Naive thymus-derived CD4-positive, alpha-beta T cell (primary cell): ENCODE measurements at regions of chr2 and their contacts with region 1.

Region 1: GRCh38 chr2:73233154-73233931 is at the start of gene PRADC1:
- DNase-seq: peak; percentile 73 to 95 (median 91)
- ATAC-seq: peak; percentile 89
- H3K4me3 ChIP-seq: peak within 1 kb of the TSS; percentile 90
- H3K4me3 Mint-ChIP-seq: peak within 1 kb of the TSS; percentile 88 to 100 (median 98)
- H3K27ac ChIP-seq: peak within 1 kb of the TSS; percentile 94
- H3K27ac Mint-ChIP-seq: peak within 1 kb of the TSS; percentile 77 to 96 (median 94)
- H3K4me1 ChIP-seq: peaks cover 15% of the 10 kb centered on the region in 2 donors
- H3K4me1 Mint-ChIP-seq: peaks cover 25 to 41% (median 37%) of the 10 kb centered on the region in 7 donors
- H3K27me3 ChIP-seq: no peaks in the 10 kb centered on the region
- H3K27me3 Mint-ChIP-seq: peaks cover 0 to 2% (median 0%) of the 10 kb centered on the region in 5 donors
- total RNA-seq, gene PRADC1: 4.3 to 8.8 (median 6.9) TPM

Region 2: GRCh38 chr2:72999729-73000725 is 233.3 kb before region 1 on chr2:
- CTCF ChIA-PET with region 1: no interaction called
- POLR2A ChIA-PET with region 1: no interaction called
- intact Hi-C with region 1: no loop called
- DNase-seq: peak in 1 of 9 donors; percentile 10
- ATAC-seq: no peak
- H3K4me3 ChIP-seq: no peak overlapping the region
- H3K4me3 Mint-ChIP-seq: no peak overlapping the region
- H3K27ac ChIP-seq: no peak overlapping the region
- H3K27ac Mint-ChIP-seq: no peak overlapping the region
- H3K4me1 ChIP-seq: no peaks in the 10 kb centered on the region
- H3K4me1 Mint-ChIP-seq: no peaks in the 10 kb centered on the region
- H3K27me3 ChIP-seq: no peaks in the 10 kb centered on the region
- H3K27me3 Mint-ChIP-seq: no peaks in the 10 kb centered on the region

Region 3: DNA sequence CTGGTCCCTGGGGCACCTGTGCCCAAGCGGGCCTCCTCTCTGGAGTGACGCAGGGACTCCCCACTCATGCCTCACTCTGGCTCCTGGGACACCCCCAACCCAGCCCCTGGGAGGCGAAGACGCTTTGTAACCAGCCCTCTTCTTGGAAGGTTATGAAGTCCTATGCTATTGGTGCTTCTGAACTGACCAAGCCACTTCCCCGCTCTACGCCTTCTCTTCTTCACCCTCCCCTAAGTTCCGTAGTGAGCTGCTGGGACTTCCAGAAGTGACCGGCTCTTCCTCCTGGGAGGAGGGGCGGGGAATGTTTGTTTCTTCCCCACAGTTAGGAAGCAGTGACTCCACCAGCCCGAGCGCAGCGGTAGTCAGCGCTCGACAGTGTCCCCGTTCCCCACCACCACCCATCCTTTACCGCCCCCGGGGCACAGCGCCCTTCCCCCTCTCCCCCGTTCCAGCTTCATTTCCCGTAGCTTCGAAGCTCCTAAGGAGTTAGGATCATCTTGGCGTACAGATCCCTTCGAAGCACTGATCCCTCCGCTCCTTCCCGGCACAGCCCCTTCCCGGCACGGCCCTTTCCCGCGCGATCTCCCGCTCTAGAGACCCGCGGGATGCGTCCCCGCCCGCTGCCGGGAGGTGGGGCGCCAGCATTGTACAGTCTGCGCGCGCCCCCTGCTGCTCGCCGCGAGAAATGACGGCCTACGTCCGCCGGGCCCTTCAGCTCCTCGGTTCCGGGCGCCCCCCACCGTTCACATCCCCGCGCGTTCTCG is 56.3 kb before region 1 on chr2:
- CTCF ChIA-PET with region 1: interaction called, 5 read pairs
- POLR2A ChIA-PET with region 1: interaction called, 6 read pairs
- intact Hi-C with region 1: loop called (anchors 1 kb)
- DNase-seq: peak; percentile 74 to 92 (median 88)
- ATAC-seq: peak; percentile 96
- H3K4me3 ChIP-seq: peak overlapping the region; percentile 67
- H3K4me3 Mint-ChIP-seq: peak overlapping the region; percentile 83 to 92 (median 90)
- H3K27ac ChIP-seq: no peak overlapping the region
- H3K27ac Mint-ChIP-seq: peak overlapping the region in 5 of 9 donors; percentile 28 to 88 (median 51)
- H3K4me1 ChIP-seq: peaks cover 15 to 20% of the 10 kb centered on the region in 2 donors
- H3K4me1 Mint-ChIP-seq: peaks cover 9 to 17% (median 12%) of the 10 kb centered on the region in 7 donors
- H3K27me3 ChIP-seq: peaks cover 0 to 3% of the 10 kb centered on the region in 2 donors
- H3K27me3 Mint-ChIP-seq: peaks cover 22 to 72% (median 29%) of the 10 kb centered on the region in 5 donors

Region 4: GRCh38 chr2:73284296-73285158 is 51.2 kb after region 1 on chr2 and contains the start of gene FBXO41:
- CTCF ChIA-PET with region 1: no interaction called
- POLR2A ChIA-PET with region 1: interaction called, 25 read pairs
- intact Hi-C with region 1: loop called (anchors 1 kb)
- DNase-seq: peak; percentile 43 to 79 (median 61)
- ATAC-seq: peak; percentile 81
- H3K4me3 ChIP-seq: peak within 1 kb of the TSS; percentile 69
- H3K4me3 Mint-ChIP-seq: peak within 1 kb of the TSS; percentile 72 to 91 (median 85)
- H3K27ac ChIP-seq: peak within 1 kb of the TSS; percentile 61
- H3K27ac Mint-ChIP-seq: peak within 1 kb of the TSS in 7 of 9 donors; percentile 32 to 87 (median 58)
- H3K4me1 ChIP-seq: peaks cover 12 to 14% of the 10 kb centered on the region in 2 donors
- H3K4me1 Mint-ChIP-seq: peaks cover 6 to 26% (median 19%) of the 10 kb centered on the region in 7 donors
- H3K27me3 ChIP-seq: no peaks in the 10 kb centered on the region
- H3K27me3 Mint-ChIP-seq: peaks cover 0 to 34% (median 14%) of the 10 kb centered on the region in 5 donors
- total RNA-seq, gene FBXO41: 13.2 to 19.6 (median 17.6) TPM

Region 5: DNA sequence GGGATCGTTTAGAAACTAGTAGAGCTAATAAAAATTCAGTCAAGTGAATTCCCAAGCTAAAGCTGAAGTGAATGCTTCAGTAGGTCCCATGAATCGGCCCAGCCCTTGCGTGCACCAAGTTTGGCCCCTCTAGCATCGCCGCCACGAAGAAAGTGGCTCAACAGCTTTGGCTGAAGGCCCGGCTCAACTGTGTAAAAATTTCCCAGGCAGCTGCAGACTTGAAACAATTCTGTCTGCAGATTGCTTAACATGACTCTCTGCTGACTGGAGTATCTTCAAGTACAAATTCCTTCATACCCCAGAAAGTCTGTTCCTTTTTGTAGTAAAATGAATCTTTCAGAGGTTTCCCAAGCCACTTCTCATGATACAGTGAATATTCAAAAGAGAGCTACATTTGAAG is 185.0 kb after region 1 on chr2:
- CTCF ChIA-PET with region 1: no interaction called
- POLR2A ChIA-PET with region 1: no interaction called
- intact Hi-C with region 1: no loop called
- DNase-seq: no peak
- ATAC-seq: no peak
- H3K4me3 ChIP-seq: no peak overlapping the region
- H3K4me3 Mint-ChIP-seq: no peak overlapping the region
- H3K27ac ChIP-seq: no peak overlapping the region
- H3K27ac Mint-ChIP-seq: no peak overlapping the region
- H3K4me1 ChIP-seq: no peaks in the 10 kb centered on the region
- H3K4me1 Mint-ChIP-seq: peaks cover 0 to 8% (median 2%) of the 10 kb centered on the region in 7 donors
- H3K27me3 ChIP-seq: no peaks in the 10 kb centered on the region
- H3K27me3 Mint-ChIP-seq: no peaks in the 10 kb centered on the region

Region 6: GRCh38 chr2:73926493-73927338 is 693.4 kb after region 1 on chr2 and contains the start of gene DGUOK:
- CTCF ChIA-PET with region 1: no interaction called
- POLR2A ChIA-PET with region 1: no interaction called
- intact Hi-C with region 1: loop called in 1 of 2 experiments (anchors 2 kb)
- DNase-seq: peak; percentile 81 to 99 (median 98)
- ATAC-seq: peak; percentile 99
- H3K4me3 ChIP-seq: peak within 1 kb of the TSS; percentile 87
- H3K4me3 Mint-ChIP-seq: peak within 1 kb of the TSS; percentile 80 to 97 (median 92)
- H3K27ac ChIP-seq: peak within 1 kb of the TSS; percentile 98
- H3K27ac Mint-ChIP-seq: peak within 1 kb of the TSS; percentile 79 to 99 (median 98)
- H3K4me1 ChIP-seq: peaks cover 37 to 41% of the 10 kb centered on the region in 2 donors
- H3K4me1 Mint-ChIP-seq: peaks cover 35 to 57% (median 52%) of the 10 kb centered on the region in 7 donors
- H3K27me3 ChIP-seq: no peaks in the 10 kb centered on the region
- H3K27me3 Mint-ChIP-seq: no peaks in the 10 kb centered on the region
- total RNA-seq, gene DGUOK: 43.1 to 73.9 (median 65.8) TPM

Region 7: DNA sequence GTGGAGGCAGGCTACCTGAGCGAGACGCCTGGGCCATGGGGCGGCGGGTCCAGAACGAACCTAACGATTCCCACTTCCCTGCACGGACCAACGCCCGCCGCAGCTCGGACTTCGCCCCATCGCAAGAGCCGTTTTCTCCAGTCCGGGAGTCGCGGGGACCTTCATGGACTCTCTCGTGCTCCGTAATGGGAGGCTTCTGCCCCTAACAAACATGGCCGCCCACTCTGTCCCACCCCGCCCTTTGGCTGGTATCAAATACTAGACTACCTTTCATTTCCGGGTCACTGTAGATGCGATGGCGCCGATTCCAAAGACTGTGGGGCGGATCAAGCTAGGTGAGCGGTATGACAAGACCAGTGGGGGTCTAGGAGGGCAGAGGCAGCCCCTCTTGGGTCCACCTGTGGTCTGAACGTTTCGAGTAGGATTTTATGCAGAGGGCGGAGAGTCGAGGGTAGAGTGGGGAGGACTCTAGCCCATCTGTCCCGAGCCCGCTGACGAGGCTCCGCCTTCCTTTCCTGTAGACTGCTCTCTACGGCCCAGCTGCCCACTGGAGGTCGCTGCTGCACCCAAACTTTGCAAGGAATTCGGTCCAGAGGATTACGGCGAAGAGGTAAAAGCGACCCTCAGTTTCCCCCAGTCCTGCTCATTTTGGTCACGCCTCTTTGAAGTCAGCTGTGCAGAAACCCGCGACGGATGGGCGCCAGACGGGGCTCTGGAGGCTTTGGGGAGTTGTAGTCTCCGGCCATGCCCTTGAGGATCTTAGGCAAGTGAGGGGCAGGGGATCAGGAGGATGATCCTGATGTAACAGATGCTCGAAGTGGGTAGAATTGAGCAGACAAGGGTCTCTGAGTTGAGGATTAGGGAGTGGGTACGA is 1249.7 kb after region 1 on chr2 and contains the starts of genes CCDC142 and TTC31:
- CTCF ChIA-PET with region 1: no interaction called
- POLR2A ChIA-PET with region 1: no interaction called
- intact Hi-C with region 1: loop called in 1 of 2 experiments (anchors 10 kb)
- DNase-seq: peak; percentile 76 to 96 (median 96)
- ATAC-seq: peak; percentile 96
- H3K4me3 ChIP-seq: peak within 1 kb of the TSS; percentile 99
- H3K4me3 Mint-ChIP-seq: peak within 1 kb of the TSS; percentile 91 to 100 (median 98)
- H3K27ac ChIP-seq: peak within 1 kb of the TSS; percentile 85
- H3K27ac Mint-ChIP-seq: peak within 1 kb of the TSS; percentile 93 to 100 (median 99)
- H3K4me1 ChIP-seq: peaks cover 22 to 26% of the 10 kb centered on the region in 2 donors
- H3K4me1 Mint-ChIP-seq: peaks cover 21 to 59% (median 41%) of the 10 kb centered on the region in 7 donors
- H3K27me3 ChIP-seq: no peaks in the 10 kb centered on the region
- H3K27me3 Mint-ChIP-seq: no peaks in the 10 kb centered on the region
- total RNA-seq, gene CCDC142: 21.4 to 75.2 (median 33.8) TPM
- total RNA-seq, gene TTC31: 35.5 to 50.4 (median 43.6) TPM

Region 8: DNA sequence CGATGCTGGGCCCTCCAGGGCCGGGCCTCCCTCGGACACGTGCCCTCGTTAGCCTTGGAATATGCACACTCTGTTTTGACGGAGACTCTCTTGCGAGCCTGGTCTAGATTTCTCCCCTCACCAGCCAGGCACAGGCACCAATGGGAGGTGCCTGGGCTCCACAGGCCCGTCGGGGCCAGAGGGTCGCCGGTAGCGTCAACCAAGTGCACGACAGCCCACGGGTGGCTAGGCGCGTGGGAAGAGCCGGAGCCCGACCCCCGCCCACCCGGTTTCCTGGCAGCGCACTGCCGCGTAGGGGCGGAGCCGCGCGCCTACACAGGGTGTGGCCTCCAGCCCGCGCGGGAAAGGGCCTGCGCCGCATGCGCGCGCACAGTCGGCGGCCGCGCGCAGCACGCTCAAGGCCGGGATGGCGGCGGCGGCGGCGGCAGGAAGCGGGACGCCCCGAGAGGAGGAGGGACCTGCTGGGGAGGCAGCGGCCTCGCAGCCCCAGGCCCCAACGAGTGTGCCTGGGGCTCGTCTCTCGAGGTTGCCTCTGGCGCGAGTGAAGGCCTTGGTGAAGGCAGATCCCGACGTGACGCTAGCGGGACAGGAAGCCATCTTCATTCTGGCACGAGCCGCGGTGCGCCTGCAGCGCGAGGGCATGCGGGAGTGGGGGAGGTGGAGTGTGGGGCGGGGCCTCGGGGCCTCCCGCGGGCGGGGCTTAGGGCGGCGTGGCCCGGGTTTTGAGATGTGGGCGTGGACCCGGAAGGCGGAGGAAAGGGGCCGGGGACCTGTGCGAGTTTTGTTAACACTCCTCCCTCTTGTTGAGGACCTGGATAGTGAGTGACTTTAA is 1725.1 kb after region 1 on chr2 and contains the start of gene POLE4:
- CTCF ChIA-PET with region 1: no interaction called
- POLR2A ChIA-PET with region 1: no interaction called
- intact Hi-C with region 1: loop called in 1 of 2 experiments (anchors 5 kb)
- DNase-seq: peak; percentile 89 to 96 (median 95)
- ATAC-seq: peak; percentile 95
- H3K4me3 ChIP-seq: peak within 1 kb of the TSS; percentile 78
- H3K4me3 Mint-ChIP-seq: peak within 1 kb of the TSS; percentile 70 to 88 (median 85)
- H3K27ac ChIP-seq: peak within 1 kb of the TSS; percentile 87
- H3K27ac Mint-ChIP-seq: peak within 1 kb of the TSS; percentile 70 to 96 (median 89)
- H3K4me1 ChIP-seq: peaks cover 9 to 14% of the 10 kb centered on the region in 2 donors
- H3K4me1 Mint-ChIP-seq: peaks cover 30 to 87% (median 65%) of the 10 kb centered on the region in 7 donors
- H3K27me3 ChIP-seq: no peaks in the 10 kb centered on the region
- H3K27me3 Mint-ChIP-seq: no peaks in the 10 kb centered on the region
- total RNA-seq, gene POLE4: 37.8 to 49.1 (median 43.6) TPM